Thyroid gland (tissue), 4 donors: ENCODE measurements at regions of chr7 and their contacts with region 1.

Region 1: GRCh38 chr7:98106647-98107445 is at the start of gene LMTK2:
- DNase-seq: peak; percentile 95 to 97
- H3K4me3 ChIP-seq: peak within 1 kb of the TSS; percentile 88 to 98 (median 88)
- H3K27ac ChIP-seq: peak within 1 kb of the TSS; percentile 60 to 86 (median 85)
- H3K4me1 ChIP-seq: peaks cover 13 to 18% of the 10 kb centered on the region in 2 donors
- H3K27me3 ChIP-seq: no peaks in the 10 kb centered on the region
- CTCF ChIP-seq: peak; percentile 81 to 98 (median 94)
- POLR2A ChIP-seq: peak; percentile 83 to 99
- total RNA-seq, gene LMTK2: 22.0 to 36.5 (median 26.6) TPM

Region 2: GRCh38 chr7:98137826-98138151 is 30.9 kb after region 1 on chr7:
- intact Hi-C with region 1: no loop called
- DNase-seq: no peak
- H3K4me3 ChIP-seq: no peak overlapping the region
- H3K27ac ChIP-seq: no peak overlapping the region
- H3K4me1 ChIP-seq: peaks cover 6 to 12% of the 10 kb centered on the region in 2 donors
- H3K27me3 ChIP-seq: no peaks in the 10 kb centered on the region
- CTCF ChIP-seq: no peak
- POLR2A ChIP-seq: no peak

Region 3: GRCh38 chr7:98168181-98168905 is 61.5 kb after region 1 on chr7:
- intact Hi-C with region 1: loop called (anchors 2 kb)
- DNase-seq: peak; percentile 70 to 77
- H3K4me3 ChIP-seq: no peak overlapping the region
- H3K27ac ChIP-seq: no peak overlapping the region
- H3K4me1 ChIP-seq: no peaks in the 10 kb centered on the region
- H3K27me3 ChIP-seq: no peaks in the 10 kb centered on the region
- CTCF ChIP-seq: peak; percentile 65 to 86 (median 80)
- POLR2A ChIP-seq: no peak

Region 4: GRCh38 chr7:98464558-98464940 is 357.7 kb after region 1 on chr7:
- intact Hi-C with region 1: no loop called
- DNase-seq: no peak
- H3K4me3 ChIP-seq: no peak overlapping the region
- H3K27ac ChIP-seq: no peak overlapping the region
- H3K4me1 ChIP-seq: no peaks in the 10 kb centered on the region
- H3K27me3 ChIP-seq: no peaks in the 10 kb centered on the region
- CTCF ChIP-seq: no peak
- POLR2A ChIP-seq: no peak